Activated CD4-positive, alpha-beta memory T cell treated with anti-CD3 and anti-CD28 coated beads, Interleukin-2, amount 10 ng/mL, durations not matched to agents 7 days and 5 days (primary cell): ENCODE measurements at regions of chr1 and their contacts with region 1.

Region 1: GRCh38 chr1:206925106-206925736 is 3.5 kb upstream of the FCMR start:
- DNase-seq: peak; percentile 71
- H3K4me3 Mint-ChIP-seq: no peak overlapping the region
- H3K27ac Mint-ChIP-seq: no peak overlapping the region
- H3K4me1 Mint-ChIP-seq: peaks cover 22% of the 10 kb centered on the region
- H3K27me3 Mint-ChIP-seq: no peaks in the 10 kb centered on the region

Region 2: GRCh38 chr1:206839857-206840256 is 85.4 kb before region 1 on chr1:
- CTCF ChIA-PET with region 1: no interaction called
- POLR2A ChIA-PET with region 1: no interaction called
- DNase-seq: no peak
- H3K4me3 Mint-ChIP-seq: no peak overlapping the region
- H3K27ac Mint-ChIP-seq: no peak overlapping the region
- H3K4me1 Mint-ChIP-seq: no peaks in the 10 kb centered on the region
- H3K27me3 Mint-ChIP-seq: peaks cover 37% of the 10 kb centered on the region

Region 3: DNA sequence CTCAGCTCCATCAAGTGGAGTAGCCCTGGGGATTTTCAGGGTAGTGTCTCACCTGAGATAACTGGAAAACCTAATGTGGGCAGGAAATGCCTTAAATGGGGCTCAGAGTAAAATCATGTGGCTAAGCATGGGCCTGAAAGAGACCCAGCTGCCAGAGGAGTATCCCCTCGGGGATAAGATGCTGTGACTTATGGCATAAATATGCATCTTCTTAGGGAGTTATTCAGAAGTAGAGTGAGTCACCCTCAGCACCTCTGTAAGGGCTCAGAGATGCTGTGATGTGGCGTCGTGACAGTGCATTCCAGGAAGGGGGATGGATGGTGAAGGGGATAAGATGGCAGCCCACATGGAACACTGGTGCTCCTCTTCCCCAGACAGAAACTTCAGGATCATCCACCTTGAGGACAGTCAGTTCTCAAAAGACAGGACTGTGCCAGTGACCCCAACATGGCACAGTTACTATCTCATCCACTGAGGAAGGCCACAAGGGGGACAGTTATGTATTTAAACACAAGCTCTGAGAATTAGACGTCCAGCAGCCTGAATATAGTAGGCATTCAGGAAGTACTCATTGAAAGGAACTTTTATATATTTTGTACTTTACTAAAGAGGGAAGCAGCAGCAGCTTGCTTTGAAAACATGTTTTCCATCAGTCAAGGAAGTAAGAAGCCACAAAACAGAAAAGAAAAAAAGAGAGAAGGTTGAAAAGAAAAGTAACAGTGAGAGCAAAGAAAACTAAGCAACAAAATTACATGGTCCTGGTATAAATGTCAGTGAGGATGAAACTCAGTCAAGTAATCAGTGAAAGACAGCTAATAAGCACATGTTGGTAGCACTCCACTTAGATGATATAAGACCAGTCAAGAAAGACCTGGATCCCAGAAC is 19.7 kb before region 1 on chr1:
- CTCF ChIA-PET with region 1: interaction called, 13 read pairs
- POLR2A ChIA-PET with region 1: interaction called, 12 read pairs
- DNase-seq: no peak
- H3K4me3 Mint-ChIP-seq: no peak overlapping the region
- H3K27ac Mint-ChIP-seq: peak overlapping the region; percentile 48
- H3K4me1 Mint-ChIP-seq: peaks cover 41% of the 10 kb centered on the region
- H3K27me3 Mint-ChIP-seq: no peaks in the 10 kb centered on the region

Region 4: GRCh38 chr1:206935491-206936067 is 10.4 kb after region 1 on chr1:
- CTCF ChIA-PET with region 1: interaction called, 23 read pairs
- POLR2A ChIA-PET with region 1: interaction called, 12 read pairs
- DNase-seq: peak; percentile 54
- H3K4me3 Mint-ChIP-seq: no peak overlapping the region
- H3K27ac Mint-ChIP-seq: no peak overlapping the region
- H3K4me1 Mint-ChIP-seq: peaks cover 8% of the 10 kb centered on the region
- H3K27me3 Mint-ChIP-seq: no peaks in the 10 kb centered on the region

Region 5: GRCh38 chr1:206982216-206982615 is 57.0 kb after region 1 on chr1:
- CTCF ChIA-PET with region 1: interaction called, 22 read pairs
- POLR2A ChIA-PET with region 1: no interaction called
- DNase-seq: peak; percentile 70
- H3K4me3 Mint-ChIP-seq: no peak overlapping the region
- H3K27ac Mint-ChIP-seq: no peak overlapping the region
- H3K4me1 Mint-ChIP-seq: no peaks in the 10 kb centered on the region
- H3K27me3 Mint-ChIP-seq: peaks cover 47% of the 10 kb centered on the region

Region 6: DNA sequence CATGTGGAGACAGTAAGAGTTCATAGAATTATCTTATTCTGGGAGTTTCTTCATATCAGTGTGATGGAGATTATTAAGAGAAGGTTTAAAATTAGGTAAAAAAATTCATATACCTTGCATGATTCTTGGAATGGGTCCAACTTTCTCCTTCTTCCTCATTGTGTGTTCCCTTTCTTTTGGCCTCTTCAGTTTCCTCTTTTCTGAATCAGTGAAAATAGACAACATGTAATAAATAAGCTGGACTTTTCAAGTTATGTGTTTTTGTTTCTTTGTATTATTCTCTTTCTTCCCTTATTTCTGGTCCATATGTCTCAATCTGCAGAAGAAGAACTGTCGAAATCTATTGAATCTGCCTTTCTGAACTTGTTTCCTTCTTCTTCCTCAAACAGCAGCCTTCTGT is 209.4 kb after region 1 on chr1:
- CTCF ChIA-PET with region 1: no interaction called
- POLR2A ChIA-PET with region 1: no interaction called
- DNase-seq: no peak
- H3K4me3 Mint-ChIP-seq: no peak overlapping the region
- H3K27ac Mint-ChIP-seq: no peak overlapping the region
- H3K4me1 Mint-ChIP-seq: no peaks in the 10 kb centered on the region
- H3K27me3 Mint-ChIP-seq: peaks cover 3% of the 10 kb centered on the region